ENCODE measurements at regions of chr14 and their contacts with region 1.

Region 1: DNA sequence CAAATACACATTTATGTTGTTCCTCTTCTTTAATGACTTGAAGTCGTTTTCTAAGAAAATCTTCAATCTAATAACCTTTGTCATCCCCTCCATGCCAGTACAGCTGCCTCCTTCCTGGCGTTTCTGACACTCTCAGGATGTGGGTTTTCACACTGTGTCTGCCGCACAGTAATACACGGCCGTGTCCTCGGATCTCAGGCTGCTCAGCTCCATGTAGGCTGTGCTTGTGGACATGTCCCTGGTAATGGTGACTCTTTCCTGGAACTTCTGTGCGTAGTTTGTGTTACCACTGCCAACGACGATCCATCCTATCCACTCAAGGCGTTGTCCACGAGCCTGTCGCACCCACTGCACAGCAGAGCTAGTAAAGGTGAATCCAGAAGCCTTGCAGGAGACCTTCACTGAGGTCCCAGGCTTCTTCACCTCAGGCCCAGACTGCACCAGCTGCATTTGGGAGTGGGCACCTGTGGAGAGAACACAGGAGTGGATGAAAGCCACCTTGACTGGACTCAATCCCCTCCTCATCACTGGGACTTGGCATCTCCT is 1095.9 kb downstream of the TMEM121 start:
- DNase-seq: peak; percentile 63
- ATAC-seq: peak; percentile 66
- H3K4me3 Mint-ChIP-seq: no peak overlapping the region
- H3K27ac Mint-ChIP-seq: no peak overlapping the region
- H3K4me1 Mint-ChIP-seq: peaks cover 12% of the 10 kb centered on the region
- H3K27me3 Mint-ChIP-seq: peaks cover 22% of the 10 kb centered on the region
- CTCF ChIP-seq: no peak

Region 2: DNA sequence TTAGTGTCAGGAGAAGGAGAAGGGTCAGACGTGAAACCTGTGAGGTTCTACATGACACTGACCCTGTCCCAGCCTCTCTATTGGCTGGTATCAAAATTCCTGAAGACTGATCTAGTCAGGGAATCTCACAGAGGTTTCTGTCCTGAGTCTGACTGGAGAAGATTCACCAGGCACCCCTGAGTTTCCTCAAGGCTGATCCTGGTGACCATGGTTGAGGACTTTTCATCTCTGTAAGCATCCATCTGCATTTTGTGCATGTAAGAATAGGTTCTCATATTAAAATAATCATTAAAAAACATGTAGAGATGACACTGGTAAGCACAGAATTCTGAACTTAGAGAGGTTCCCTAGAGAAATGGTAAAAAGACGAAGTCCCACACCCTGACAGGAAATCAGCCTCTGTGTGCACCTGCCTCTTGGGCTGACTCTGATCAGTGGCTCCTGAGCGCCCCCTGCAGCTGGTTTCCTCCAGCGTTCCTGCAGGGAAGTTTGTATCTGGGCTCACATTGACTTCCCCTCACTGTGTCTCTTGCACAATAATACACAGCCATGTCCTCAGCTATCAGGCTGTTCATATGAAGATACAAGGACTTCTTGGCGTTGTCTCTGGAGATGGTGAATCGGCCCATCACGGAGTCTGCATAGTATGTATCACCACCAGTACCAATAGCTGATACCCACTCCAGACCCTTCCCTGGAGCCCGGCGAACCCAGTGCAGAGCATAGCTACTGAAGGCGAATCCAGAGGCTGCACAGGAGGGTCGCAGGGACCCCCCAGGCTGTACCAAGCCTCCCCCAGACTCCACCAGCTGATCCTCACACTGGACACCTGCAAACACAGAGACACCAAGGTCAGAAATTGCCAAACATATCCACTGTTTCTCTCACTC is 104.0 kb before region 1 on chr14:
- CTCF ChIA-PET with region 1: no interaction called
- POLR2A ChIA-PET with region 1: no interaction called
- intact Hi-C with region 1: no loop called
- DNase-seq: peak; percentile 94
- ATAC-seq: peak; percentile 75
- H3K4me3 Mint-ChIP-seq: no peak overlapping the region
- H3K27ac Mint-ChIP-seq: no peak overlapping the region
- H3K4me1 Mint-ChIP-seq: peaks cover 11% of the 10 kb centered on the region
- H3K27me3 Mint-ChIP-seq: peaks cover 2% of the 10 kb centered on the region
- CTCF ChIP-seq: peak; percentile 91

Region 3: GRCh38 chr14:106564058-106564656 is 58.1 kb before region 1 on chr14:
- CTCF ChIA-PET with region 1: interaction called, 14 read pairs
- POLR2A ChIA-PET with region 1: no interaction called
- intact Hi-C with region 1: no loop called
- DNase-seq: peak; percentile 85
- ATAC-seq: peak; percentile 80
- H3K4me3 Mint-ChIP-seq: no peak overlapping the region
- H3K27ac Mint-ChIP-seq: no peak overlapping the region
- H3K4me1 Mint-ChIP-seq: no peaks in the 10 kb centered on the region
- H3K27me3 Mint-ChIP-seq: peaks cover 12% of the 10 kb centered on the region
- CTCF ChIP-seq: peak; percentile 97

Region 4: GRCh38 chr14:106599209-106599608 is 23.1 kb before region 1 on chr14:
- CTCF ChIA-PET with region 1: interaction called, 133 read pairs
- POLR2A ChIA-PET with region 1: no interaction called
- intact Hi-C with region 1: no loop called
- DNase-seq: no peak
- ATAC-seq: no peak
- H3K4me3 Mint-ChIP-seq: no peak overlapping the region
- H3K27ac Mint-ChIP-seq: no peak overlapping the region
- H3K4me1 Mint-ChIP-seq: no peaks in the 10 kb centered on the region
- H3K27me3 Mint-ChIP-seq: peaks cover 19% of the 10 kb centered on the region
- CTCF ChIP-seq: no peak

Region 5: GRCh38 chr14:106633721-106634120 is 11.4 kb after region 1 on chr14:
- CTCF ChIA-PET with region 1: interaction called, 54 read pairs
- POLR2A ChIA-PET with region 1: no interaction called
- intact Hi-C with region 1: no loop called
- DNase-seq: no peak
- ATAC-seq: no peak
- H3K4me3 Mint-ChIP-seq: no peak overlapping the region
- H3K27ac Mint-ChIP-seq: no peak overlapping the region
- H3K4me1 Mint-ChIP-seq: peaks cover 1% of the 10 kb centered on the region
- H3K27me3 Mint-ChIP-seq: peaks cover 15% of the 10 kb centered on the region
- CTCF ChIP-seq: no peak

Region 6: DNA sequence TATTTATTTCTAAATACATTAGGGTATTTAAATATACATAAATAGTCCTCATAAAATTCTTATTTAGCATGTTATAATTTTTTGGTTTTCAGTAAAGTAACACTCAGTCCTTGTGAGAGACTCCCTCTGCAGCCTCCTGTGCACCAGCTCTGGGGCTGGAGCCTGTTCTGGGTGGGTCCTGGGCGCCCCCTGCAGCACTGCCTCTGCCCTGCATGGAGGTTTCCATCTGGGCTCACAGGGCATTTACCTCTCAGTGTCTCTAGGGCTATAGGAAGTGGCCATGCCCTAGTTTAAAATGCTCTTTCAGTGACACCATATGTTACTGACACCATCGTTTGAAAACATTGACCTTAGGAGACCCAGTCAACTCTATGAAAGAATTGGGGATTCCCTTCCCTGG is 59.3 kb after region 1 on chr14:
- CTCF ChIA-PET with region 1: interaction called, 16 read pairs
- POLR2A ChIA-PET with region 1: no interaction called
- intact Hi-C with region 1: no loop called
- DNase-seq: peak; percentile 27
- ATAC-seq: peak; percentile 97
- H3K4me3 Mint-ChIP-seq: no peak overlapping the region
- H3K27ac Mint-ChIP-seq: no peak overlapping the region
- H3K4me1 Mint-ChIP-seq: no peaks in the 10 kb centered on the region
- H3K27me3 Mint-ChIP-seq: peaks cover 13% of the 10 kb centered on the region
- CTCF ChIP-seq: peak; percentile 56

Region 7: DNA sequence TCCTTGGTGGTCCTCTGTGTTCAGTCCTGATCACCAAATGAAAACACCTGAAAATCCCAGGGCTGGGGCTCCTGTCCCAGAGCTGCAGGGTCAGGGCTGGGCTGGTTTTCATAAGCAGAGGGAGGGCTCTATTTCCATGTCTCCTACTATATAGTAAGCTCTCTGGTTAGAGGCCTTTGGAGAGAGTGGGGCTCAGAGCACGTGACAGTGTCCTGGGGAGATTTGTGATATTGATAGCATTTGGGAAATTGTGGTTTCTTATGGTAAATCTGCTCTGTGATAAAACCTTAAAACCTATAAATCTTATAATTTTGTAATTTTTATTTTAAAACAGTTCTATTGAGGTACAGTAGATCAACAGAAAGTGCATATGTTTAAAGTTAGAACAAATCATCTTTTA is 106.3 kb after region 1 on chr14:
- CTCF ChIA-PET with region 1: no interaction called
- POLR2A ChIA-PET with region 1: no interaction called
- intact Hi-C with region 1: no loop called
- DNase-seq: no peak
- ATAC-seq: no peak
- H3K4me3 Mint-ChIP-seq: no peak overlapping the region
- H3K27ac Mint-ChIP-seq: no peak overlapping the region
- H3K4me1 Mint-ChIP-seq: peaks cover 17% of the 10 kb centered on the region
- H3K27me3 Mint-ChIP-seq: no peaks in the 10 kb centered on the region
- CTCF ChIP-seq: no peak